Activated naive CD8-positive, alpha-beta T cell treated with anti-CD3 and anti-CD28 coated beads, Interleukin-2, amount 10 ng/mL, durations not matched to agents 7 days and 5 days (primary cell): ENCODE measurements at regions of chr10 and their contacts with region 1.

Region 1: DNA sequence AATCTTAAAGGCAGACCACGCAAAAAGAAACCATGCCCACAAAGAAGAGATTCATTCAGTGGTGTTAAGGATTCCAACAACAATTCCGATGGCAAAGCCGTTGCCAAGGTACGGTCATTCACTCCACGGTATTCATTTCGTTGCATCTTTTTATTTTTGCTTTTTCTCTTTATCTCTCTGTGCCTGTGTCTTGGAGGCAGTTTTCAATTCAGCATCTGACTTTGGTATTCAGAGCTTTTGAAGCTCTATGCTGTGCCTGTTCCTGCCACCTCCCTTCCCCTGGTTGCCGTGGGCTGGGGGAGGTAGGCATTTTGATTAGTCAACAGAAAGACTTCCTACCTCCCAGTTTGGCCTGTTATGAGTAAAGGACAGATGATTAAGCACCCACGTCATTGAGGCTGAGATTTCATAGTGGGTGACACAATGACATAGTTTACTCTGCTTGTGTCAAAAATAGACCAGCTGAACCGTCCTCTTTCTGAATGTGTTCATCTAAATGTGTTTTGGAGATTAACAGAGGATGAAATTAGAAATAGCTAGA is 149.5 kb downstream of the ARID5B start:
- DNase-seq: no peak
- ATAC-seq: peak; percentile 51
- H3K4me3 Mint-ChIP-seq: peak overlapping the region; percentile 75
- H3K27ac Mint-ChIP-seq: peak overlapping the region; percentile 96
- H3K4me1 Mint-ChIP-seq: peaks cover 86% of the 10 kb centered on the region
- H3K27me3 Mint-ChIP-seq: no peaks in the 10 kb centered on the region

Region 2: DNA sequence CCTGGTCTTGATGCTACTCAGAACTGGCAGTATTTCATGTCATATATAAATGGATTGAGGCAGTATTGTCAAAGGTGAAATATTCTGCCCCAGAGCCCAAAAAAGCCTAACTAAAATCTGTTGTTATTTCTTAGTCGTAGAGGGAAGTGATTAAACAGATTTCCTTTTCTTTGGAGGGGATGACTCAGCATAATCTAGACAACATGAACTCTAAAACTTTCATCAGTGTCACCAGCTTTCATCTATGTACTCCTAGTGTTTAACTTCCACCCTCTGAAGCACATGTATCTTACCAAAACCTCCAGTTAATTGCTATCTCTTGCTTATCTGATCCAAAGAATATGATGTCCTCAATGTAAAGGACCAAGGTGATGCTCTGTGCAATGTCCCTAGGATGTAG is 246.5 kb before region 1 on chr10:
- POLR2A ChIA-PET with region 1: no interaction called
- DNase-seq: no peak
- ATAC-seq: no peak
- H3K4me3 Mint-ChIP-seq: no peak overlapping the region
- H3K27ac Mint-ChIP-seq: no peak overlapping the region
- H3K4me1 Mint-ChIP-seq: peaks cover 2% of the 10 kb centered on the region
- H3K27me3 Mint-ChIP-seq: no peaks in the 10 kb centered on the region

Region 3: DNA sequence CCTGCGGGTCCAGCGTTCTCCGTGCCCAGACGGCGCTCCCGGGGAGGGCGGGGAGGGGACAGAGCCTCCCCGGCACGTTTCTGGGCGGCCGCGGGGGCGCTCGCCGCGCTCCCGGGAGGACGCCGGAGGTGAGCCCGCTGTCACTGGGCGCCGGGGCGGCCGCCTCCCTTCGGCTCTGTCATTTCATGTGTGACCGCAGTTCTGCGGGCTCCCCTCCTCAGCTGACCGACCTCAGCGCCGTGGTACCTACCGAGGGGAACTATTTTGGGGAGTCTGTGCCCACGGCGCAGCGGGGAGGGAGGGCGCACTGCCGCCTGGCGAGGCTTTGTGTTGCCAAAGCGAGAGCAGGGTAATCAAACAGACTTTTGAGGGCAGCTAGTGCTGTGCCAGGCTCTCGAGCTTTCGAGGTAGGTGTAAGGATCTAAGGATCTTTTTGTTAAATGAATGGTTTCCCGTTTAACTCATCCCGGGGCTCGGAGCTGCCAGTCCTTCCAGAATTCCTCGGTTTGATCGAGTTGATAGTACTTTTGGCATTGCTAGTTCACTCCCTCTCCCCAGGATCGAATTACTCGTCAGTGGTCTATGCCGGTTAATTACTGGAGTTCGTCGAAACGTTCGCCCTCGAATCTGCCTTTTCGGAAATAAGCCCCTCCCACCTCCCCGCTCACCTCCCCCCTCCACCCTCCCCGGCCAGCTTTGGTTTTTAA is 147.6 kb before region 1 on chr10:
- POLR2A ChIA-PET with region 1: interaction called, 22 read pairs
- DNase-seq: peak; percentile 83
- ATAC-seq: peak; percentile 62
- H3K4me3 Mint-ChIP-seq: peak overlapping the region; percentile 95
- H3K27ac Mint-ChIP-seq: peak overlapping the region; percentile 93
- H3K4me1 Mint-ChIP-seq: peaks cover 32% of the 10 kb centered on the region
- H3K27me3 Mint-ChIP-seq: no peaks in the 10 kb centered on the region

Region 4: GRCh38 chr10:62038609-62039190 is 12.3 kb before region 1 on chr10:
- POLR2A ChIA-PET with region 1: interaction called, 12 read pairs
- DNase-seq: peak; percentile 67
- ATAC-seq: peak; percentile 67
- H3K4me3 Mint-ChIP-seq: peak overlapping the region; percentile 36
- H3K27ac Mint-ChIP-seq: peak overlapping the region; percentile 80
- H3K4me1 Mint-ChIP-seq: peaks cover 53% of the 10 kb centered on the region
- H3K27me3 Mint-ChIP-seq: no peaks in the 10 kb centered on the region

Region 5: DNA sequence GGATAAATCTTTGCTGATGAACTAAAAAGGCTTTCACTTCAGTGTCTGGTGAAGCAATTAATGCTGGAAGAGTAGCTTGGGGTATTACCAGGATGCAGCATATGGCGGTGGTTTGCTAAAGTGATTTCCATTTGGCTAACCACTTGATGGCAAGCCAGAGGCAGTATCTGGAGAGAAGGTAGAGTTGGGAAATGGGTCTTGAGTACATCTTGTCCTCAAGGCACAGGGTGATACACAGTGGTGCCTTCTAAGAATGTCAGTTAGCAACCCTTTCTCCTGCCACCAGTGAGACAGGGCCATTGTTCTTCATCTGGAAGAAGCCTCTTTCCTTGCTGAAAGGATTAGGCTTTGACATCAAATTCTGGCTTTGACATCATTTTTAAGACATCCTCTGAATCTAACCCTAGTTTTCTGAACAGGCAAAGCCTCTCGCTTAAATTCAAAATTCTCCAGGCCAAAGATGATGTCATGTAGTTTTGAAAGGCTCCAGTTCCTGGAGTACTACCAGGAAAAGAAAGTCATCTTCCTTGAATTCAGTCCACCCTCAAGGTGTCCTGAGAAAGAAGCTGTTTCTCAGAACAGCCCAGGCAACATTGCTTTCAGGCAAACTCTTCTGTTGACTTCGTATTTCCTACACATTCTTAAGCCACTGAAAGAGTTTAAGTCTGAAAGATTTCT is 13.0 kb after region 1 on chr10:
- POLR2A ChIA-PET with region 1: interaction called, 43 read pairs
- DNase-seq: no peak
- ATAC-seq: peak; percentile 87
- H3K4me3 Mint-ChIP-seq: peak overlapping the region; percentile 72
- H3K27ac Mint-ChIP-seq: peak overlapping the region; percentile 89
- H3K4me1 Mint-ChIP-seq: peaks cover 51% of the 10 kb centered on the region
- H3K27me3 Mint-ChIP-seq: no peaks in the 10 kb centered on the region

Region 6: GRCh38 chr10:62082729-62083411 is 31.9 kb after region 1 on chr10:
- POLR2A ChIA-PET with region 1: interaction called, 17 read pairs
- DNase-seq: no peak
- ATAC-seq: peak; percentile 93
- H3K4me3 Mint-ChIP-seq: peak overlapping the region; percentile 51
- H3K27ac Mint-ChIP-seq: peak overlapping the region; percentile 94
- H3K4me1 Mint-ChIP-seq: peaks cover 59% of the 10 kb centered on the region
- H3K27me3 Mint-ChIP-seq: no peaks in the 10 kb centered on the region

Region 7: GRCh38 chr10:62183442-62183841 is 132.5 kb after region 1 on chr10:
- POLR2A ChIA-PET with region 1: interaction called, 56 read pairs
- DNase-seq: no peak
- ATAC-seq: peak; percentile 87
- H3K4me3 Mint-ChIP-seq: peak overlapping the region; percentile 62
- H3K27ac Mint-ChIP-seq: peak overlapping the region; percentile 91
- H3K4me1 Mint-ChIP-seq: peaks cover 67% of the 10 kb centered on the region
- H3K27me3 Mint-ChIP-seq: no peaks in the 10 kb centered on the region